ENCODE measurements at regions of chr7 and their contacts with region 1.

Region 1: GRCh38 chr7:92567460-92567859 is 22.7 kb downstream of the FAM133B start:
- DNase-seq: no peak
- H3K4me3 ChIP-seq: no peak overlapping the region
- H3K27ac ChIP-seq: no peak overlapping the region
- H3K4me1 ChIP-seq: no peaks in the 10 kb centered on the region
- CTCF ChIP-seq: no peak

Region 2: DNA sequence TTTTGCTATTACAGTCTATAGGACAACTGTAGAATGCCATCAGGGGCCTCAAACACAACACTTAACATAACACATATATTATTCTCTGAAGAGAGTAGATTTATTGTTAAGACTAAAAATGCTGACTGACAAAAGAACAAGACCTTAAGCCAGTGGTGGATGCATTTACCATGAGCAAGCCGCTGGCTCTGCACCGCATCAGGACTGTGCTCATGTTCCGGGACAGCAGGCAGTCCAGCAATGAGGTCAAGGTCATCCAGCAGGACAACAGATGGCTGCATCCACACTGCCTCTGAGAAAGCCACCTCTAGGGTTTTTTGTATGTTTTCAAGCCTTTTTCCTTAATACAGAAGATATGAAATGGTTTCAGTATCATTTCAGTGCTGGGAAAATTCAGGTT is 62.9 kb before region 1 on chr7:
- CTCF ChIA-PET with region 1: no interaction called
- POLR2A ChIA-PET with region 1: no interaction called
- intact Hi-C with region 1: loop called (anchors 10 kb)
- DNase-seq: no peak
- H3K4me3 ChIP-seq: no peak overlapping the region
- H3K27ac ChIP-seq: no peak overlapping the region
- H3K4me1 ChIP-seq: no peaks in the 10 kb centered on the region
- CTCF ChIP-seq: no peak

Region 3: DNA sequence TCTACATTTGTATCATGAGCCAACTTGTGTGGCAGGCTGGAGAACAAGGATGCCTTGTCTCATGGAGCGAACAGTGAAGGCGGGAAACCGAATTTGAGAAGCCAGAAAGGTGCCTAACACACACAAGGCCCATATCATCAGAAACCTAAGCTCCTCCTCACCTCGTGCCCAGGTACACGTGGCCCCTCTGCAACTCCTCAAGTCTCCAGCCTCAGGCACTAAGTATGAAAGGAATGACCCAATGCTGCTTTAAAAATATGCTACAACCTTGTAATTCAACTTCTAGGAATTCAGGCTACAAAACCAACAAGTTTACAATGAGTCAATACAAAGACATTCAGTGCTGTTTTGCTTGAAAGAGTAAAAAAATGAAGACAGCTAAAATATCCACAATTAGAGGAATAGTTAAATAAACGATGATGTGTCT is 173.3 kb after region 1 on chr7:
- CTCF ChIA-PET with region 1: no interaction called
- POLR2A ChIA-PET with region 1: no interaction called
- intact Hi-C with region 1: no loop called
- DNase-seq: no peak
- H3K4me3 ChIP-seq: no peak overlapping the region
- H3K27ac ChIP-seq: no peak overlapping the region
- H3K4me1 ChIP-seq: no peaks in the 10 kb centered on the region
- CTCF ChIP-seq: no peak